CD8-positive, alpha-beta T cell (primary cell): ENCODE measurements at regions of chr14 and their contacts with region 1.

Region 1: GRCh38 chr14:38016497-38016896 is 191.2 kb upstream of the SSTR1 start:
- DNase-seq: peak in 1 of 9 experiments; percentile 2
- ATAC-seq: no peak
- H3K4me3 ChIP-seq: no peak overlapping the region
- H3K4me3 Mint-ChIP-seq: no peak overlapping the region
- H3K27ac ChIP-seq: no peak overlapping the region
- H3K27ac Mint-ChIP-seq: no peak overlapping the region
- H3K4me1 ChIP-seq: no peaks in the 10 kb centered on the region
- H3K4me1 Mint-ChIP-seq: no peaks in the 10 kb centered on the region
- H3K27me3 ChIP-seq: no peaks in the 10 kb centered on the region
- H3K27me3 Mint-ChIP-seq: no peaks in the 10 kb centered on the region
- CTCF ChIP-seq: no peak

Region 2: GRCh38 chr14:37641125-37641524 is 375.4 kb before region 1 on chr14:
- CTCF ChIA-PET with region 1: no interaction called
- POLR2A ChIA-PET with region 1: no interaction called
- intact Hi-C with region 1: no loop called
- DNase-seq: no peak
- ATAC-seq: no peak
- H3K4me3 ChIP-seq: no peak overlapping the region
- H3K4me3 Mint-ChIP-seq: no peak overlapping the region
- H3K27ac ChIP-seq: no peak overlapping the region
- H3K27ac Mint-ChIP-seq: no peak overlapping the region
- H3K4me1 ChIP-seq: no peaks in the 10 kb centered on the region
- H3K4me1 Mint-ChIP-seq: no peaks in the 10 kb centered on the region
- H3K27me3 ChIP-seq: no peaks in the 10 kb centered on the region
- H3K27me3 Mint-ChIP-seq: no peaks in the 10 kb centered on the region
- CTCF ChIP-seq: no peak

Region 3: DNA sequence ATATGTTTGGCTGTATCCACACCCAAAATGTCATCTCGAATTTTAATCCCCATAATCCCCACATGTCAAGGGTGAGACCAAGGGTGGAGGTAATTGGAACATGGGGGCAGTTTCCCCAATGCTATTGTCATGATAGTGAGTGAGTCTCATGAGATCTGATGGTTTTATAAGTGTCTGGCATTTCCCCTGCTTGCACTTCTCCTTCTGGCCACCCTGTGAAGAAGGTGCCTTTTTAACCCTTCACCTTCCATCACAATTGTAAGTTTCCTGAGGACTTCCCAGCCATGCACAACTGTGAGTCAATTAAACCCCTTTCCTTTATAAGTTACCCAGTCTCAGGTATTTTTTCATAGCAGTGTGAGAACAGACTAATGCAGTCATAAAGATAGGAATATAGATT is 25.5 kb before region 1 on chr14:
- CTCF ChIA-PET with region 1: interaction called, 3 read pairs
- POLR2A ChIA-PET with region 1: no interaction called
- intact Hi-C with region 1: loop called in 1 of 2 experiments (anchors 1 kb)
- DNase-seq: no peak
- ATAC-seq: no peak
- H3K4me3 ChIP-seq: no peak overlapping the region
- H3K4me3 Mint-ChIP-seq: no peak overlapping the region
- H3K27ac ChIP-seq: no peak overlapping the region
- H3K27ac Mint-ChIP-seq: no peak overlapping the region
- H3K4me1 ChIP-seq: peaks cover 2% of the 10 kb centered on the region
- H3K4me1 Mint-ChIP-seq: peaks cover 4% of the 10 kb centered on the region
- H3K27me3 ChIP-seq: no peaks in the 10 kb centered on the region
- H3K27me3 Mint-ChIP-seq: no peaks in the 10 kb centered on the region
- CTCF ChIP-seq: no peak

Region 4: GRCh38 chr14:38964630-38965029 is 948.1 kb after region 1 on chr14:
- CTCF ChIA-PET with region 1: no interaction called
- POLR2A ChIA-PET with region 1: no interaction called
- intact Hi-C with region 1: no loop called
- DNase-seq: no peak
- ATAC-seq: no peak
- H3K4me3 ChIP-seq: no peak overlapping the region
- H3K4me3 Mint-ChIP-seq: no peak overlapping the region
- H3K27ac ChIP-seq: no peak overlapping the region
- H3K27ac Mint-ChIP-seq: no peak overlapping the region
- H3K4me1 ChIP-seq: no peaks in the 10 kb centered on the region
- H3K4me1 Mint-ChIP-seq: no peaks in the 10 kb centered on the region
- H3K27me3 ChIP-seq: no peaks in the 10 kb centered on the region
- H3K27me3 Mint-ChIP-seq: peaks cover 9% of the 10 kb centered on the region
- CTCF ChIP-seq: no peak